ENCODE measurements at regions of chr1 and their contacts with region 1.

Region 1: DNA sequence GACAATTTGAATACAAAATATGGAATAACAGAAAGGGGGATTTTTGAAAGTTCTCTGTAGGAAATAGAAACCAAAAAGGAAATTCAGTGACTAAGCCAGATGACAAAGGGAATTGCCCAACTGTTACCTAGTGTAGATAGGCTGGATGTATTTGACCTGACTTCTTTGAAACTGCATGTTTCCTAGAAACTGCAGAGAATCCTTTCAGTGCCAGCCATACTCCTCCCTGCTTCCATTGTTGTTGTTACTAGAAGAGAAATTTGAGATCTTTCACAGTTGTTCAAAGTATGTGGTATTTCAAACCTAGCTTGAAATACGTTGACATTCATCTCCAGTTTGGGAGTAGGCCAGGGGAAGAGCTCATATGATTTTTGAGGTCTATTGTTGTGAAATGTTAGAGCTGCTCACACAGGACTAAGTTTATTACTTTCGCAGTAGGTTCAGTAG is 1.8 kb upstream of the GBP5 start:
- DNase-seq: no peak
- ATAC-seq: peak; percentile 39

Region 2: DNA sequence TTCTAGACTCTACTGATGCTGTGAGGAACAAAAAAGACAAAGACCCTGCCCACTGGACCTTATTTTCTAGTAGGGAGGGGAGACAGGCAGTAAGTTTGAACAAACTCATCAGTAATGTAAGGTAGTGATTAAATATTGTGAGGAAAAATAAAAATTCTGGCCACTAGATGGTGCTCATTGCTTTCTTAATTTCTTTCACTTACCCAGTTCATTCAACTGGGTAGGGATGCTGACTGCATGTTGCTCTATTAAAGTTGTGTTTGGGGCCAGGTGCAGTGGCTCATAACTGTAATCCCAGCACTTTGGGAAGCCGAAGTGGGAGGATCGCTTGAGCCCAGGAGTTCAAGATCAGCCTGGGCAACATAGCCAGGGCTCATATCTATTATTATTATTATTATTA is 275.7 kb before region 1 on chr1:
- intact Hi-C with region 1: loop called (anchors 2 kb)
- DNase-seq: no peak
- ATAC-seq: peak; percentile 79

Region 3: DNA sequence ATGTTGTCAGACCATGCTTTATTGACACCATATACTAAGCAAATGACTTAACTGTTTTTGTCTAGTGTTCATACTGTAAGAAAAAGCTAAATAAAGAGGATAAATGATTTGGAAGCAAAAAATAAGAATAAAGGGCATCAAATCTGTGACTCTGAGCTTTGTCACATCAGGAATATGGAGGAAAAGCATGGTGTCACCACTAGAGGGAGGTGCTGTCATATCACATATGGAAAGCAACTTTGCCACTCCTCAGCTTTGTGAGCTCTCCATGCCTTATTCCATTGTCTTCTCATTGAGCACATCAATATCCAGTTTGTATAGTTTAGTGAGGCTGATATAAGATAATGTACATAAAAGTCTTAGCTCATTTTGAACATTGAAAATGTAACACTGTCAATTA is 188.7 kb before region 1 on chr1:
- intact Hi-C with region 1: loop called (anchors 10 kb)
- DNase-seq: no peak
- ATAC-seq: no peak

Region 4: GRCh38 chr1:89322402-89322801 is 48.0 kb after region 1 on chr1:
- intact Hi-C with region 1: no loop called
- DNase-seq: no peak
- ATAC-seq: peak; percentile 50

Region 5: DNA sequence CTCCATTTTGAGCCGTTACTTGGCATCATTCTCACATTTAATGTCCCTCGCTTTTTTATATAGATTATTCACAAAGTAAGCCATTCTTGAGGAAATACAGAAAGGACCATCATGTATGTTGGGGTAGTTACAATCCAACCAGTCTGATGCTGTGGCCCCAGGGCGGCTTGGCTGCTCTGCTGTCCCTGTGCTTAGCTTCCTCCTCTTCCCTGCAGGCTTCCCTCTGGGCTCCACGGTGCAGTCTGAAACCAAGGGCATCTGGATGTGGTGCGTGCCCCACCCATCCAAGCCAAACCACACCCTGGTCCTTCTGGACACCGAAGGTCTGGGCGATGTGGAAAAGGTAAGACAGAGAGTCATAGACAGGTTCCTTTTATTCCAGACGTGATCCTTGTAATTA is 94.9 kb after region 1 on chr1:
- intact Hi-C with region 1: no loop called
- DNase-seq: no peak
- ATAC-seq: no peak